ENCODE measurements at regions of chr18 and their contacts with region 1.

Region 1: GRCh38 chr18:9913526-9914333 is at the start of gene VAPA:
- DNase-seq: peak; percentile 98
- H3K4me3 Mint-ChIP-seq: peak within 1 kb of the TSS; percentile 91
- H3K27ac Mint-ChIP-seq: peak within 1 kb of the TSS; percentile 94
- H3K4me1 Mint-ChIP-seq: peaks cover 25% of the 10 kb centered on the region
- H3K27me3 Mint-ChIP-seq: peaks cover 13% of the 10 kb centered on the region
- total RNA-seq, gene VAPA: 182 and 196 TPM in 2 replicates

Region 2: DNA sequence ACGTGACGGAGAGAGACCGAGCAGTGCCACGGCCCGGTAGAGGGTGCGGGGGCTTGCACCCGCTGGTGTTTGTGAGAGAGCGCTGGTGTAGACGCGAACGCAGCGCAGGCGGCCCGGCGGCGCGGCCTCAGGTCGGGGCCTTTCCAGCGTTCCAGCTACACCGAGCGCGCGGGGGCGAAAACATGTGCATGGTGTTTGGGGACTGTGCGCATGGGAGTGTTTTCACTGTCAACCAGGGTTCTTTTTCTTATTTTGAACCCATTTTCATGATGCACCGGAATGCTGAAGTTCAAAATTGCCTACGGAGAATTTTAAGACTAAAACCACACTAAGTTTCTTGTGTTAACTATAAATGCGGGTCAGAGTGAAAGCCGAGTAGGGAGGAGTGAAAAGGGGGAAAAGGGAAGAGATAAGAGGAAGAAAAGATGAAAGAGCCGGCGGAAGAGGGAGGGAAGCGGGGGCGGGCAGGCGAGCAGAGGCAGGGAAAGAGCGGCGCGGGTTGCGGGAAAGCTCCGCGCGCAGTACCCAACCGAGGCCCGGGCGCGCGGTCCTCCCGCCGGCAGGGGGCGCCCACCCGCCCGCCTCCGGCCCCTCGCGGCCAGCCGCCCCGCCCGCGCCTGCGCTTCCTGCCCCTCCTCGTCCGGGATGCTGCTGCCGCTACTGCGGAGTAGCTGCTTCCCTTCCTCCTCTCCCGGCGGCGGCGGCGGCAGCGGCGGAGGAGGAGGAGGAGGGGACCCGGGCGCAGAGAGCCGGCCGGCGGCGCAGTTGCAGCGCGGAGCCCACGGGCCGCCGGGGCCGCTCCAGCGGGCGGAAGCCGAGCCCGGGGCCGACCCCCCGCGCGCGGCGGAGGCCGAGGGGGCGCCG is 1304.7 kb before region 1 on chr18 and contains the start of gene RAB12:
- intact Hi-C with region 1: loop called (anchors 5 kb)
- DNase-seq: peak; percentile 96
- H3K4me3 Mint-ChIP-seq: peak within 1 kb of the TSS; percentile 93
- H3K27ac Mint-ChIP-seq: peak within 1 kb of the TSS; percentile 92
- H3K4me1 Mint-ChIP-seq: peaks cover 43% of the 10 kb centered on the region
- H3K27me3 Mint-ChIP-seq: peaks cover 17% of the 10 kb centered on the region
- total RNA-seq, gene RAB12: 19.2 and 20.2 TPM in 2 replicates

Region 3: GRCh38 chr18:9102508-9103375 is 811.0 kb before region 1 on chr18 and contains the start of gene NDUFV2:
- intact Hi-C with region 1: loop called (anchors 5 kb)
- DNase-seq: peak; percentile 100
- H3K4me3 Mint-ChIP-seq: peak within 1 kb of the TSS; percentile 95
- H3K27ac Mint-ChIP-seq: peak within 1 kb of the TSS; percentile 98
- H3K4me1 Mint-ChIP-seq: peaks cover 54% of the 10 kb centered on the region
- H3K27me3 Mint-ChIP-seq: no peaks in the 10 kb centered on the region
- total RNA-seq, gene NDUFV2: 357 and 360 TPM in 2 replicates

Region 4: GRCh38 chr18:9474983-9475642 is 438.6 kb before region 1 on chr18 and contains the start of gene RALBP1:
- intact Hi-C with region 1: loop called (anchors 1 kb)
- DNase-seq: peak; percentile 100
- H3K4me3 Mint-ChIP-seq: peak within 1 kb of the TSS; percentile 83
- H3K27ac Mint-ChIP-seq: peak within 1 kb of the TSS; percentile 96
- H3K4me1 Mint-ChIP-seq: peaks cover 25% of the 10 kb centered on the region
- H3K27me3 Mint-ChIP-seq: peaks cover 12% of the 10 kb centered on the region
- total RNA-seq, gene RALBP1: 38.9 and 41.3 TPM in 2 replicates

Region 5: GRCh38 chr18:9861933-9862332 is 51.8 kb before region 1 on chr18:
- intact Hi-C with region 1: loop called (anchors 1 kb)
- DNase-seq: no peak
- H3K4me3 Mint-ChIP-seq: peak overlapping the region; percentile 7
- H3K27ac Mint-ChIP-seq: peak overlapping the region; percentile 88
- H3K4me1 Mint-ChIP-seq: peaks cover 5% of the 10 kb centered on the region
- H3K27me3 Mint-ChIP-seq: peaks cover 2% of the 10 kb centered on the region

Region 6: GRCh38 chr18:9951022-9951859 is 37.5 kb after region 1 on chr18:
- intact Hi-C with region 1: loop called (anchors 5 kb)
- DNase-seq: peak; percentile 69
- H3K4me3 Mint-ChIP-seq: no peak overlapping the region
- H3K27ac Mint-ChIP-seq: peak overlapping the region; percentile 51
- H3K4me1 Mint-ChIP-seq: peaks cover 6% of the 10 kb centered on the region
- H3K27me3 Mint-ChIP-seq: no peaks in the 10 kb centered on the region

Region 7: GRCh38 chr18:10329101-10329500 is 415.4 kb after region 1 on chr18:
- intact Hi-C with region 1: no loop called
- DNase-seq: no peak
- H3K4me3 Mint-ChIP-seq: no peak overlapping the region
- H3K27ac Mint-ChIP-seq: no peak overlapping the region
- H3K4me1 Mint-ChIP-seq: no peaks in the 10 kb centered on the region
- H3K27me3 Mint-ChIP-seq: peaks cover 5% of the 10 kb centered on the region

Region 8: GRCh38 chr18:11851146-11851805 is 1937.5 kb after region 1 on chr18 and contains the start of gene CHMP1B:
- intact Hi-C with region 1: loop called (anchors 5 kb)
- DNase-seq: peak; percentile 99
- H3K4me3 Mint-ChIP-seq: peak within 1 kb of the TSS; percentile 99
- H3K27ac Mint-ChIP-seq: peak within 1 kb of the TSS; percentile 100
- H3K4me1 Mint-ChIP-seq: peaks cover 24% of the 10 kb centered on the region
- H3K27me3 Mint-ChIP-seq: peaks cover 2% of the 10 kb centered on the region
- total RNA-seq, gene CHMP1B: 22.7 and 24.4 TPM in 2 replicates